ENCODE measurements at regions of chr1 and their contacts with region 1.

Region 1: DNA sequence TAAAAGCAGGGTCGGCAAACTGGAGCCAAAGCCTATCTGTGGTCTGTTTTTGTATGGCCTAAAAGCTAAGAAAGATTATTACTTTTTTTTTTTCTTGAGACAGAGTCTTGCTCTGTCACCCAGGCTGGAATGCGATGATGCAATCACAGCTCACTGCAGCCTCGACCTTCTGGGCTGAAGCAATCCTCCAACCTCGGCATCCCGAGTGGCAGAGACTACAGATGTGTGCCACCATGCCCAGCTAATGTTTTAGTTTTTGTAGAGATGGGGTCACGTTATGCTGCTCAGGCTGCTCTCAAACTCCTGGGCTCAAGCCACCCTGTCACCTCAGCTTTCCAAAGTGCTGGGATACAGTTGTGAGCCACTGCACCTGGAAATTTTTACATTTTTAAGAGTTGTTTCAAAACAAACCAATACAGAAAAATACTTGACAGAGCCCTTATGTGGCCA is 6.5 kb upstream of the GLRX2 start:
- DNase-seq: peak; percentile 92
- H3K4me3 Mint-ChIP-seq: no peak overlapping the region
- H3K27ac Mint-ChIP-seq: peak overlapping the region; percentile 65
- H3K4me1 Mint-ChIP-seq: peaks cover 34% of the 10 kb centered on the region
- H3K27me3 Mint-ChIP-seq: no peaks in the 10 kb centered on the region
- CTCF ChIP-seq: no peak

Region 2: GRCh38 chr1:192118881-192119405 is 992.7 kb before region 1 on chr1:
- CTCF ChIA-PET with region 1: no interaction called
- POLR2A ChIA-PET with region 1: no interaction called
- intact Hi-C with region 1: no loop called
- DNase-seq: no peak
- H3K4me3 Mint-ChIP-seq: no peak overlapping the region
- H3K27ac Mint-ChIP-seq: no peak overlapping the region
- H3K4me1 Mint-ChIP-seq: no peaks in the 10 kb centered on the region
- H3K27me3 Mint-ChIP-seq: no peaks in the 10 kb centered on the region
- CTCF ChIP-seq: no peak

Region 3: DNA sequence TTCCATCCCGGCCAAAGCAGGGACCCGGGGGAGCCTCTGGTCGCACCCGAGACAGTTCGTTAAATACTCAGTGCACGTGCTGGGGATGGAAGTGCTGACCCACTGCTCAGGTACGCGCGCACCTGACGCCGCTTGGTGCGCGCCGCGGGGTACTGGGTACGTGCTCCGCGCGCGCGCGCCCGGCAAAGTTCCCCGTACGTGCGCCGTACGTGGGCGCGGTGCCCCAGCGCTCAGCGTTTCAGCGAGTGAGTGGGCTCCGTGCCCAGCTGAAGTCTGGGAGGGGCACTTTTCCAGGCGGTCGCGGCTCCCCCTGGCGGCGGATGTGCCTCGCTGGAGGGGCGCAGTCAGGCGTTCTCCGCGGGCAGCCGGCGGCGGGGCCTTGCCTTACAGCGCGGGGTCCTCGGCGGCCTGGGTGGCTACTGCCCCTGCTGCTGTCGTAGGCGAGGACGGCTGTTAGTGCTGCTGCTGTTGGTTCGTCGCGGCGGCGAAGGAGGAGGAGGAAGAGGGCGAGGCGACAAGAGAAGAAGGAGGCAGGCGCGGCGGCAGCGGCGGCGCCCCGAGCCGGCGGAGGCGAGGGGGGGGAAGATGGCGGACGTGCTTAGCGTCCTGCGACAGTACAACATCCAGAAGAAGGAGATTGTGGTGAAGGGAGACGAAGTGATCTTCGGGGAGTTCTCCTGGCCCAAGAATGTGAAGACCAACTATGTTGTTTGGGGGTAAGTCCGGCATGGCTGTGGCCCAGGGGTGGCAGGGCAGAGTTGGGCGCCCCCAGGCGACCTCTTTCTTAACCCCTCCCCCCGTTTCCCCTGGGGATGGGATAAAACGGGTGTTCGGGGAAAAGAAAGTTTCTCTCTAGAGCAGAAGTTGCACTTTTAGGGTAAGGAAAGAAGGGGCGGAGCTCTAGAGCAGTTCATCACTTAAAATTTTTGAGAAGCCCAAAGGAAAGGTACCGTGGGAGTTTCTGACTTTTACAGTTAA is 10.2 kb after region 1 on chr1 and contains the start of gene CDC73:
- CTCF ChIA-PET with region 1: interaction called, 114 read pairs
- POLR2A ChIA-PET with region 1: interaction called, 302 read pairs
- intact Hi-C with region 1: no loop called
- DNase-seq: peak; percentile 99
- H3K4me3 Mint-ChIP-seq: peak within 1 kb of the TSS; percentile 91
- H3K27ac Mint-ChIP-seq: peak within 1 kb of the TSS; percentile 88
- H3K4me1 Mint-ChIP-seq: peaks cover 20% of the 10 kb centered on the region
- H3K27me3 Mint-ChIP-seq: no peaks in the 10 kb centered on the region
- CTCF ChIP-seq: peak; percentile 99
- total RNA-seq, gene CDC73: 79.8 and 85.8 TPM in 2 replicates

Region 4: DNA sequence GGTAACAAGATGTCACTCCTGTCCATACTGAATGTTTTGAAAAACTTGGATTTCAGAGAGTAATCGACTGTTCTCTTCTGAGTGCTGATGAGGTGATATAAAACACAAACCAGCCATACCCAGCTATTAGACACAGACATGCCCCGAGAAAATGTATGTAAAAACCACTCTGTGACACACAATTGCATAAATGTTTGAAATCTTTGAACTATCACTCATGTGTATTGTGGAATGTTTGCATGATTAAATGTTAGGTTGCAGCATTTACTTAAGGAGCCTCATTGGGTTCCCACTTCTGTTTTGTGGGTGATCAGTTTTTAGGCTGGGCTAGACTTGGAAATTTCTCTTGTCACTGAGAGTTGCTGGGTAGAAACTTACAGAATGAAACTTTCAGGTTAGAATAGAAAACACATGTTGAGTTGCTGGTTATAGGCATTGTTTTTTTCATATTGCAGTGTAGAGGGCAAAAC is 345.2 kb after region 1 on chr1:
- CTCF ChIA-PET with region 1: no interaction called
- POLR2A ChIA-PET with region 1: no interaction called
- intact Hi-C with region 1: no loop called
- DNase-seq: no peak
- H3K4me3 Mint-ChIP-seq: no peak overlapping the region
- H3K27ac Mint-ChIP-seq: no peak overlapping the region
- H3K4me1 Mint-ChIP-seq: no peaks in the 10 kb centered on the region
- H3K27me3 Mint-ChIP-seq: no peaks in the 10 kb centered on the region
- CTCF ChIP-seq: no peak

Measured in MCF 10A (cell line).